ENCODE measurements at regions of chr13 and their contacts with region 1.

Region 1: DNA sequence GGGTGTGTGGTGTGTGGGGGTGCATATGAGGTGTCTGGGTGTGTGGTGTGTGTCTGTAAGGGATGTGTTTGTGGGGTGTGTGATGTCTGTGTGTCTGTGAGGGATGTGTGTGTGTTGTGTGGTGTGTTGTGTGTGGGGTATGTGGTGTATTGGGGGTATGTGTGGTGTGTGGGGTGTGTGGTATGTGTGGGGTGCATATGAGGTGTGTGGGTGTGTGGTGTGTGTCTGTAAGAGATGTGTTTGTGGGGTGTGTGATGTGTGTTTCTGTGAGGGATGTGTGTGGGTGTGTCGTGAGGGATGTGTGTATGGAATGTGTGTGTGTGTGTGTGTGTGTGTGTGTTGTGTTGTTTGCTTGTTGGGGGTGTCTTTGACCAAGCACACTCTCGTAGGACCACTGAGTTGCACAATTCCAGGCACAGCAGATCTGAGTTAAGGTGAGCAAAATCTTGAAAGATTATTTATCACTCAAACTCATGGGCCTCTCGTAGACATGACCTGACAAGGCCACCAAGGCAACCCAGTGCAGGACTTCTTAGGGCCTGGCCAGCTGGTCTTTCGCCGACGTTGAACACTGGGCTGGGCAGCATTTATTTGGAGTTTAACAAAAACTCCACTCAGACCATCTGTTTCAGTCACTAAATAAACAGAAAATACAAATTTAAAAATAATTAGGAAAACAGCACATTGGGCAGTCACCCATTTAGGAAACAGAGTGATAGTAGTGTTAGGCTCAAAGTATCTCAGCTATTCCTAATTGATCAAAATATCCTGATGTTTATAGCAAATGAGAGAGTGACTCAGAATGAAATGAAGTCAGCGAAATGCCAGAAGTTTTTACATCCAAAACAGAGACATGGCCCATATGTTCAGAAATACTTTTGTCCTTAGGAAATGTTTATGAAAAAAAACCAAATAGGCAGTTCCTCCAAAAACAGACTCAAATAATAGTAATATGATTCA is 301.1 kb downstream of the FGF9 start:
- DNase-seq: no peak
- H3K4me3 Mint-ChIP-seq: no peak overlapping the region
- H3K27ac Mint-ChIP-seq: no peak overlapping the region
- H3K4me1 Mint-ChIP-seq: no peaks in the 10 kb centered on the region
- H3K27me3 Mint-ChIP-seq: no peaks in the 10 kb centered on the region
- CTCF ChIP-seq: no peak

Region 2: GRCh38 chr13:21946964-21947363 is 25.0 kb before region 1 on chr13:
- CTCF ChIA-PET with region 1: interaction called, 11 read pairs
- intact Hi-C with region 1: no loop called
- DNase-seq: no peak
- H3K4me3 Mint-ChIP-seq: no peak overlapping the region
- H3K27ac Mint-ChIP-seq: no peak overlapping the region
- H3K4me1 Mint-ChIP-seq: no peaks in the 10 kb centered on the region
- H3K27me3 Mint-ChIP-seq: peaks cover 12% of the 10 kb centered on the region
- CTCF ChIP-seq: no peak

Measured in Calu3 (cell line).